ENCODE measurements at regions of chr12 and their contacts with region 1.

Region 1: GRCh38 chr12:103548622-103549601 is 38.2 kb upstream of the STAB2 start:
- DNase-seq: peak; percentile 47 to 77 (median 48)
- H3K4me3 ChIP-seq: no peak overlapping the region
- H3K4me3 Mint-ChIP-seq: no peak overlapping the region
- H3K27ac ChIP-seq: no peak overlapping the region
- H3K27ac Mint-ChIP-seq: no peak overlapping the region
- H3K4me1 ChIP-seq: no peaks in the 10 kb centered on the region
- H3K4me1 Mint-ChIP-seq: peaks cover 0 to 5% (median 5%) of the 10 kb centered on the region in 3 donors
- H3K27me3 ChIP-seq: no peaks in the 10 kb centered on the region
- H3K27me3 Mint-ChIP-seq: peaks cover 4 to 16% of the 10 kb centered on the region in 2 donors

Region 2: DNA sequence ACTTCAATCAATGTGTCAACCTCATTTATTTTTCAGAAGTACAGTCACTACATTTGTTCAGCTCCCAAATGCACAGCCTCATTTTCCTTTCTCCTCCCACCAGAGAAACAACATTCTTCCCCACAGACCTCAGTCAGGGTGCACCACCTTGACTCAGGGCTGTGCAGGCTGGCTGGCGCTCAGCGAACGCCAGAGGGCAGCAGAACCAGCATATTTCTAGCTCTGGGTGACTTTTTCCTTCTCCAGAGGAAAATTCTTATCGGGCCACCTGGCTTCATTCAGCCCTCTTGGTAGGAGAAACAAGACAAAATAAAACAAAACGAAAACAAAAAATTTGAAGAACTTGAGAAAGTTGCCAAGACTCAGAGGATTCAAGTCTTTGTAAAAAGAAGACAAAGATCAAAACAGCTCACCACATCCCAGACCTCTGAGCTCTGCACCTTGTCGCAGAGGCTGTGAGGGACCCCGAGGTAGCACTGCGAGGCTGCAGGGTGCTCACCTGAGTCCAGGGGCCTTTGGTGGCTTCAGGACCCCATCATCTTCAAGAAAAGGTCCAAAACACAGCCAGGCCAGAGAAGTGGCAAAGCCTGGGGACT is 665.6 kb before region 1 on chr12:
- CTCF ChIA-PET with region 1: interaction called, 15 read pairs
- POLR2A ChIA-PET with region 1: no interaction called
- DNase-seq: peak in 4 of 5 donors; percentile 10 to 53 (median 18)
- H3K4me3 ChIP-seq: no peak overlapping the region
- H3K4me3 Mint-ChIP-seq: no peak overlapping the region
- H3K27ac ChIP-seq: no peak overlapping the region
- H3K27ac Mint-ChIP-seq: no peak overlapping the region
- H3K4me1 ChIP-seq: no peaks in the 10 kb centered on the region
- H3K4me1 Mint-ChIP-seq: peaks cover 2 to 6% (median 5%) of the 10 kb centered on the region in 3 donors
- H3K27me3 ChIP-seq: no peaks in the 10 kb centered on the region
- H3K27me3 Mint-ChIP-seq: peaks cover 3 to 26% of the 10 kb centered on the region in 2 donors

Region 3: GRCh38 chr12:102948941-102949352 is 600.0 kb before region 1 on chr12:
- CTCF ChIA-PET with region 1: interaction called, 53 read pairs
- POLR2A ChIA-PET with region 1: no interaction called
- DNase-seq: peak; percentile 11 to 58 (median 38)
- H3K4me3 ChIP-seq: no peak overlapping the region
- H3K4me3 Mint-ChIP-seq: no peak overlapping the region
- H3K27ac ChIP-seq: no peak overlapping the region
- H3K27ac Mint-ChIP-seq: no peak overlapping the region
- H3K4me1 ChIP-seq: no peaks in the 10 kb centered on the region
- H3K4me1 Mint-ChIP-seq: peaks cover 0 to 8% (median 1%) of the 10 kb centered on the region in 3 donors
- H3K27me3 ChIP-seq: peaks cover 10% of the 10 kb centered on the region
- H3K27me3 Mint-ChIP-seq: peaks cover 16 to 53% of the 10 kb centered on the region in 2 donors

Measured in CD8-positive, alpha-beta memory T cell (primary cell).